Heart left ventricle (tissue), 16 donors: ENCODE measurements at regions of chr22 and their contacts with region 1.

Region 1: DNA sequence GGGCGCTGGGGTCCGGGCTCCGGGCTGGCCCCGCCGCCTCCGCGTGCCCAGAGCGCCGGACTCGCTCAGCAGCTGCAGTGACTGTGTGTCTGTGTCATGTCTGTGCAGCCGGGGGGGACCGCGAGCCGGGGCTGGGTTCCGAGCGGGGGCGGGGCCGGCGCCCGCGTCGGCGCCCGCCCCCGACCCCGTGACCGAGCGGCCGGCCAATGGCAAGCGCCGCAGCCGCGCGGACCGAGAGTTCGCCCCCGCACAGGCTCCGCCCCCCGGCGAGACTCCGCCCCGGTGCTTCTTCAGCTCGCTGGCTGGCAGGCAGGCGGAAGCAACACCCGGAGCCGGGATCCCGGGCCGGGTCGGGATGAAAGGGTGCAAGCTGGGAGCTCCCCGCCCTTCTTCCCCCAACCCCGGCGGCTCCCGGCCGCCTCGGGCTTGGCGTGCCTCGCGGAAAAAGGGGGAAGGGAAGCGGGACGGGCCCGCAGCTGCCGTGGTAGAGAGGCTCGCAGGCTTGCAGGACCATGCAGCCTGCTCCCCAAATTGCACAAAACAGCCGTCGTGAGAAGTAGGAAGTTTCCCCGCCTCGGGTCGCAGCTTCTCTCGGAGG is 750 bp upstream of the LARGE1 start:
- DNase-seq: peak; percentile 99
- ATAC-seq: peak; percentile 88 to 94 (median 91)
- H3K4me3 ChIP-seq: peak overlapping the region; percentile 44 to 97 (median 78)
- H3K27ac ChIP-seq: peak overlapping the region; percentile 14 to 92 (median 84)
- H3K4me1 ChIP-seq: peaks cover 0 to 53% (median 28%) of the 10 kb centered on the region in 12 donors
- H3K27me3 ChIP-seq: peaks cover 0 to 28% (median 0%) of the 10 kb centered on the region in 9 donors
- CTCF ChIP-seq: no peak
- POLR2A ChIP-seq: peak; percentile 78 to 97

Region 2: DNA sequence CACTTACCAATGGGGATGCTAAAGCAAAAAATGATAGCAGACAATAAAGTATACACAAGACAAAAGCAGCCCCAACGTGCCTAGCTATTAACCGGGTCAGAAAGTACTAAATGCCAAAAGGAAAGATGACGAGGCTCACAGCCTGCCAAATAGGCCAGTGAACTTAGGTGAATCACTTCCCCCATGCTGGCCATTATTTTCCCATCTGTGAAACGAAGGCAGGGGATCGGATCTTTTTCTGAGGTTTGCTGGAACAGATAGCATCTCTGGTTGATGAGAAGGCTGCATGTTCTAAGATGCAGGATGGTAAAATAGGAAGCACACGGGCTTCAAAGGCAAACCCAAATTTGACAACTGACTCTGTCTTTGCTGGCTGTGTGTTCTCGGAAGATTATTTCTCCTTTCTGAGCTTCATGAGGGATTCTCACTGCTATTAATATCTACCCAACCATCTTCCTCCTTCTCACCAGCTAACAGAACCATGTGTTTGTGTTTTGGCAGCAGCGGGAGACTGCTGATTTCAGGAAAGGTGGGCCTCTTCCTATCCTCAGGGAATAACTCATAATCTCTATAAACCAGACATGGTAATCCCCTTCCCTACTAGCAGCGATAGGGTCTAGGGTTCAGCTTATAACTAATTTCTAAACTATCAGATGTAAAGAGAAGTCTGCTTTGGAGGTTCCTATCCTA is 391.5 kb before region 1 on chr22:
- intact Hi-C with region 1: loop called in 3 of 10 experiments (anchors 5 to 10 kb)
- DNase-seq: no peak
- ATAC-seq: peak in 3 of 4 donors; percentile 70 to 87 (median 77)
- H3K4me3 ChIP-seq: no peak overlapping the region
- H3K27ac ChIP-seq: peak overlapping the region in 9 of 12 donors; percentile 5 to 67 (median 37)
- H3K4me1 ChIP-seq: peaks cover 4 to 39% (median 12%) of the 10 kb centered on the region in 12 donors
- H3K27me3 ChIP-seq: no peaks in the 10 kb centered on the region
- CTCF ChIP-seq: no peak
- POLR2A ChIP-seq: no peak

Region 3: DNA sequence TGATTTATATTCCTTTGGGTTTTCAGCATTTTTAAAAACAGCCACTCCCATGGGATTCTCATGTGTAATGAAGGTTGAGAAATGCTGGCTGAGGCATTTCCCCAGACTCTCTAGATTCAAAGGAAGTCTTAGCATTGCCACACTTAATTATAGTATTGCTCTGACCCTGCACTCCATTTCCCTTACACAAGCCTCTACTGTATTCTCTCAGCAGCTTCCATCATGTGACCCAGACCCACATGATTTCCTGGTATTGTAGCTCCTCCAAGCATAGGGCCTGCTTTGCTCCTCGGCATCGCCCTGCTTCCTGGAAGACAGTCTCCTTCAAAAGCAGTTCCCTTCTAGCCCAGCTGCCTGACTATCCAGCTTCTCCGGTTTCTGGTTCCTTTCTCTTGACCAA is 262.3 kb before region 1 on chr22:
- intact Hi-C with region 1: loop called in 4 of 10 experiments (anchors 5 to 10 kb)
- DNase-seq: peak in 4 of 5 donors; percentile 66 to 75 (median 69)
- ATAC-seq: peak; percentile 49 to 91 (median 76)
- H3K4me3 ChIP-seq: no peak overlapping the region
- H3K27ac ChIP-seq: peak overlapping the region in 11 of 12 donors; percentile 16 to 74 (median 61)
- H3K4me1 ChIP-seq: peaks cover 0 to 40% (median 12%) of the 10 kb centered on the region in 12 donors
- H3K27me3 ChIP-seq: no peaks in the 10 kb centered on the region
- CTCF ChIP-seq: no peak
- POLR2A ChIP-seq: no peak

Region 4: DNA sequence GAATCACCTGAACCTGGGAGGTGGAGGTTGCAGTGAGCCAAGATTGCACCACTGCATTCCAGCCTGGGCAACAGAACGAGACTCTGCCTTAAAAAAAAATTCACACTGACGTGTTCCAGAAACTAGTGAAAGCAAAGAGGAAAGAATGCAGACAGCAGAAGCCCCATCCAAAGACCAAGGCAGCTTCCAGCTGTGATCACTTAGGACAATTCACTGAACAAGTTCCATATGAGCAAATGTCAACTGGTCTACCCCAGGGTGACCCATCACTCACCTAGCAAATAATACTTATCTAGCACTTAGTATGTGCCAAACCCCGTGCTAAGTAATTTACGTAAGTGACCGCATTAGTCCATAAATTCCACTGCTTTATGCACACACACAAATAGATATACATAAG is 139.6 kb before region 1 on chr22:
- intact Hi-C with region 1: loop called in 3 of 10 experiments (anchors 5 to 10 kb)
- DNase-seq: peak in 4 of 5 donors; percentile 26 to 58 (median 43)
- ATAC-seq: peak; percentile 91 to 94 (median 94)
- H3K4me3 ChIP-seq: no peak overlapping the region
- H3K27ac ChIP-seq: peak overlapping the region; percentile 39 to 84 (median 74)
- H3K4me1 ChIP-seq: peaks cover 0 to 56% (median 23%) of the 10 kb centered on the region in 12 donors
- H3K27me3 ChIP-seq: no peaks in the 10 kb centered on the region
- CTCF ChIP-seq: no peak
- POLR2A ChIP-seq: no peak

Region 5: GRCh38 chr22:33873186-33873585 is 47.8 kb before region 1 on chr22:
- intact Hi-C with region 1: loop called in 5 of 10 experiments (anchors 2 to 5 kb)
- DNase-seq: peak in 4 of 5 donors; percentile 65 to 84 (median 76)
- ATAC-seq: peak; percentile 85 to 91 (median 88)
- H3K4me3 ChIP-seq: peak overlapping the region in 3 of 12 donors; percentile 12 to 41 (median 41)
- H3K27ac ChIP-seq: peak overlapping the region in 11 of 12 donors; percentile 4 to 88 (median 81)
- H3K4me1 ChIP-seq: peaks cover 3 to 81% (median 53%) of the 10 kb centered on the region in 12 donors
- H3K27me3 ChIP-seq: no peaks in the 10 kb centered on the region
- CTCF ChIP-seq: no peak
- POLR2A ChIP-seq: peak in 1 of 2 donors; percentile 45

Region 6: DNA sequence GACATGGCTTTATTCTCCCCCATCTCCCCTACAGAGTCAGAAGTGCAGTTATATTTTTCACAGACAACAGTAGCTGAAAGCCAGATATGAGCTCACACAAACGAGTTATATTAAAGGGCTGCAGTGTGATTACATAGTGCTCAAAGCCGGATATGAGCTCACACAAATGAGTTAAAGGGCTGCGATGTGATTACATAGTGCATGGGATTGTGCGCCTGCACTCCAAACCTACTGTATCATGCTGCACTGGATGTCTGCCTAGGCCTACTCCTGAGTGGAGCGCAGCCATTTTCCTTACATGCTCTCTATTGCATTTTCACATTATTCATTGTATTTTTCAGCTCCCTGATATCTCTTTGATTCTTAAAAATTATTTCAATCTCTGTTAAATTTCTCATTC is 413.9 kb after region 1 on chr22:
- intact Hi-C with region 1: loop called in 5 of 10 experiments (anchors 10 kb)
- DNase-seq: no peak
- ATAC-seq: no peak
- H3K4me3 ChIP-seq: no peak overlapping the region
- H3K27ac ChIP-seq: no peak overlapping the region
- H3K4me1 ChIP-seq: no peaks in the 10 kb centered on the region
- H3K27me3 ChIP-seq: no peaks in the 10 kb centered on the region
- CTCF ChIP-seq: no peak
- POLR2A ChIP-seq: no peak